ENCODE measurements at regions of chr3 and their contacts with region 1.

Region 1: GRCh38 chr3:183122257-183122932 is 23.1 kb upstream of the MCCC1 start:
- DNase-seq: no peak
- ATAC-seq: peak in 3 of 4 donors; percentile 52 to 78 (median 63)
- H3K4me3 ChIP-seq: no peak overlapping the region
- H3K27ac ChIP-seq: no peak overlapping the region
- H3K4me1 ChIP-seq: no peaks in the 10 kb centered on the region
- H3K27me3 ChIP-seq: peaks cover 0 to 11% (median under 1%) of the 10 kb centered on the region in 3 donors
- CTCF ChIP-seq: peak; percentile 84

Region 2: DNA sequence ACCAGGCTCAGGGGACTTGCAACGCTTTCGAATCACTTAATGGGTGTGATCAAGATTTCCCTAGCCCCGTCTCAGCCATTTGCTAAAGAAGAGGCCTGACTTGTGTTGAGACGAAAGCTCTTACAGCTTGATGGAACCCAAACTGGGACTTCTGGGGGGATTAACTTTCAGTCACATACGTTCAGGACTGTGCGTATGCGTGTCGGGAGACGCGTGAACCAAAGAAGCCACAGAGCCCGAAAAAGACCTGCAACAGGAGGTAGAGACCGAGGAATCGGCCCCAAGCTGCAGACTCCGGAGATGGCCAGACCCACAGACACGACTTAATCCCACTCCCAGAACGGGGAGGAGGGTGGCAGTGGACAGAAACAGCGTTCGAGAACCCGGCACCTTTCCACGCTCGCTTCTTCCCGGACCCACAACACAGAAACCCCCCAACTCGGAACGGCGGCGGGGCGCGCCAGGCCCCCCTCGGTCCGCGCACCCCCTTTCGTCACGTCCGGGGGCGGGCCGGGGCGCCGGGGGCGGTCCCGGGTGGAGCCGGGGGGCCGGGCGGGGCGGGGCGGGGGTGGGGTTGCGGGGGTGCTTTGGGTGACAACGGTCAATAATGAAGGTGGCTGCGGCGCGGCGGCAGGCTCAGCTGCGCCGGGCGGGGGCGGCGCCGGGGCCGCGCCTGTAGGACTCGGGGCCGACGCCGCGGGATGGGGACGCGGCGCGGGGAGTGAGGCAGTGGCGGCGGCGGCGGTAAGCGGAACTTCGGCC is 329.3 kb before region 1 on chr3 and contains the start of gene ATP11B:
- intact Hi-C with region 1: no loop called
- DNase-seq: peak; percentile 69 to 83
- ATAC-seq: peak; percentile 84 to 89 (median 88)
- H3K4me3 ChIP-seq: peak within 1 kb of the TSS; percentile 84
- H3K27ac ChIP-seq: peak within 1 kb of the TSS; percentile 95
- H3K4me1 ChIP-seq: peaks cover 23% of the 10 kb centered on the region
- H3K27me3 ChIP-seq: peaks cover 0 to 8% (median 0%) of the 10 kb centered on the region in 3 donors
- CTCF ChIP-seq: no peak
- total RNA-seq, gene ATP11B: 18.8 to 23.9 (median 20.8) TPM

Region 3: GRCh38 chr3:183385698-183386613 is 263.6 kb after region 1 on chr3:
- intact Hi-C with region 1: loop called (anchors 1 to 2 kb)
- DNase-seq: no peak
- ATAC-seq: peak; percentile 80 to 90 (median 84)
- H3K4me3 ChIP-seq: no peak overlapping the region
- H3K27ac ChIP-seq: no peak overlapping the region
- H3K4me1 ChIP-seq: no peaks in the 10 kb centered on the region
- H3K27me3 ChIP-seq: no peaks in the 10 kb centered on the region
- CTCF ChIP-seq: peak; percentile 81

Measured in psoas muscle (tissue), 8 donors.